Vagina (tissue), 2 donors: ENCODE measurements at regions of chr16 and their contacts with region 1.

Region 1: GRCh38 chr16:48385272-48386150 is at the start of gene SIAH1:
- DNase-seq: no peak
- H3K4me3 ChIP-seq: peak within 1 kb of the TSS; percentile 94 to 96
- H3K27ac ChIP-seq: peak within 1 kb of the TSS; percentile 99
- H3K4me1 ChIP-seq: peaks cover 40% of the 10 kb centered on the region
- H3K27me3 ChIP-seq: no peaks in the 10 kb centered on the region
- CTCF ChIP-seq: no peak
- POLR2A ChIP-seq: peak; percentile 69 to 88
- total RNA-seq, gene SIAH1: 26.8 TPM

Region 2: DNA sequence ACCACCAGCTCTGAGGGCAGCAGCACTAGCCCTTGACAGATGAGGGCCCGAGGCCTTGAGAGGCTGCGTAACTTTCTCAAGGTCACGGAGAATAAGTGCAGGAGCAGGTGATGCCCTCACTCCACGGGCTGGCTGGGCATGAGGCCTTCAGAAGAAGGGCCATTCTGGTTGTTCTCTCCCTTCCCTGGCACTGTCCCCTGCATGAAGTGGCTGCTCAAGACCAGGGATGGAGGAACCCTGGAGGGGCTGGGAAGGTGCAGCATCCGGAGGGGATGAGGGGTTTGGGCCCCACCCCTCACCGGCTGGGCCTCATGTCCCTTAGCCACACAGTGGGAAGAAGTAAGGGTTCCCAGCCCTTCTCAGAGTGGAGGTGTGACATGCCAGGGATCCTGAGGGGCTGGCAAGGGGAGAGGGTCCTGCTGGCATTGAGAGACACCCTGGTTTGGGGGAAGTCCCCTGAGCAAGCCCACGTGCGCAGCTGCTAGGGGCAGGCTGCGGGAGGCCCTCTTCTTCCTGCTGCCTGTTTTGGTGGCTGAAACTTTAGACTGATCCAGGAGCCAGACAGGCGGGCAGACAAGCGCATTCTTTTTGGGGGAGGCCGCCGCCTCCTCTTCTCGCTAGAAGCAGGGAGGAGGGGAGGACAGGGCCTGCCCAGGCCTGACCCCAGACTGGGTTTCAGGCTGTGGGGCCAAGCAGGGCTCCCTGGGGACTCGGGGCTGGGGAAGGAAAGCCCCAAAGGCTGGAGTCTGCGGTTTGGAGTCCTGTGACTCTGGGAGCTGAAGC is 150.5 kb after region 1 on chr16:
- intact Hi-C with region 1: loop called (anchors 10 kb)
- DNase-seq: peak; percentile 90 to 94
- H3K4me3 ChIP-seq: no peak overlapping the region
- H3K27ac ChIP-seq: peak overlapping the region; percentile 85
- H3K4me1 ChIP-seq: peaks cover 55% of the 10 kb centered on the region
- H3K27me3 ChIP-seq: no peaks in the 10 kb centered on the region
- CTCF ChIP-seq: no peak
- POLR2A ChIP-seq: no peak

Region 3: DNA sequence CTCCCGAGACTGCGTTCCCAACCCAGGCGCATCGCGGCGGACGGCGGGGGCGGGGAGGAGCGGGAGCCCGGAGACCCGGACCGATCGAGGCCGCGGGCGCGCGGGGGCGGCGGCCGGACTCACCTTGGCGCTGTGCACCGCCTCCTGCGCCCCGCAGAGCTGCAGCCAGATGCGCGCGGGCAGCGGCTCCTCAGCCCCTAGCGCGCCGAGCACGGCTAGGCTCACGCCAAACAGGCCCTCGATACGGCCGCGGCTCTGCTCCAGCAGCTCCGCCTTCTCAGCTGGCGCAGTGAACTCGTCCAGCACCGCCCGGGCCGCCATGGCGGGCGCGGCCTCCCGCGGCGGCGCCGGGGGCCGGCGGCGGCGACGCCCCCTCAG is 224.1 kb after region 1 on chr16:
- intact Hi-C with region 1: loop called (anchors 10 kb)
- DNase-seq: peak in 1 of 2 donors; percentile 85
- H3K4me3 ChIP-seq: peak overlapping the region; percentile 96 to 100
- H3K27ac ChIP-seq: peak overlapping the region; percentile 86
- H3K4me1 ChIP-seq: peaks cover 73% of the 10 kb centered on the region
- H3K27me3 ChIP-seq: no peaks in the 10 kb centered on the region
- CTCF ChIP-seq: no peak
- POLR2A ChIP-seq: no peak